OCI-LY7 (cell line): ENCODE measurements at regions of chr11 and their contacts with region 1.

Region 1: DNA sequence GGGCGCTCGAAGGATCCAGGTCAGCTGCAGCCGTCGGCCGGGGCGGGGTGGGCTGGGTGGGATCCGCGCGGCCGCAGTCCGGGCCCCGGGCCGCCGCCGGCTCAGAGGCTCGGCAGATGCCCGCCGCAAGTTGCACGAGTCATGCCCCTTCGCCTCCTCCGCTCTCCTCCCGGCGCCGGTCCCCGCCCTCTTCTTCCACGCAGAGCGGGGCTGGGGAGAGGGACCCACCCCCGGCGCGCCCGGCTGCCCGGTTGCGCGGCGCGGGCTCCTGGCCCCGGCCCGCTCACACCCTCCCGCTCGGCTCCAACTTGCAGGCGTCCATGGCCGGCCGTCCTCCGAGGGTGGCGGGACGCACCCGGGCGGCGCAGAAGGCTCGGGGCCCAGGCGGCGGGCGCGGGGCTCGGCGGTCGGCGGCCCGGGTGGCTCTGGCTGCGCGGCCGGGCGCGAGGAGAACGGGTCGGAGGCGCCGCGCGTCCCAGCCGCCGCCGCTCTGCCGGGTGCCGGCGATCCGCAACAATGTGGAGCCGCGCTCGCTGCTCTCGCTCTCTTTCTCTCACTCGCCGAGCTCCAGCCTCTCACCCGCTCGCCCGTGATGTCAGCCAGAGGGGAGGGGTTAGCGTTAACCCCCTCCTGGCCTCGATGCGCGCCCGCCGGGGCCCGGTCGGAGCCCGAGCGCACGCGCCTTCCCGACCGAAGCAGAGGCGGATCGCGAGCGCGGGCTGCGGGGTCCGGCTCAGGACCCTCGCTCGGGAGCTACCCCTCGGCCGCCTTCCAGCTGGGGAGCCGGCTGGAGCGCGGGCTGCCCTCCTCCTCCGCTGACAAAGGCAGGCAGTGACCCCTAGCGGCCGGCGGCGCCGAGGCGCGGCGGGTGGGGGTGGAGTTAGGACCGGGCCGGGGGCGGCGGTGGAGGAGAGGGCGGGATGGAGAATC is at the start of gene NECTIN1:
- DNase-seq: peak; percentile 88
- H3K4me3 ChIP-seq: peak within 1 kb of the TSS; percentile 69
- H3K27ac ChIP-seq: peak within 1 kb of the TSS; percentile 6
- H3K4me1 ChIP-seq: peaks cover 30% of the 10 kb centered on the region
- CTCF ChIP-seq: peak; percentile 95
- total RNA-seq, gene NECTIN1: 2.3 and 5.8 TPM in 2 replicates

Region 2: GRCh38 chr11:119481021-119481666 is 247.8 kb before region 1 on chr11:
- CTCF ChIA-PET with region 1: no interaction called
- POLR2A ChIA-PET with region 1: no interaction called
- intact Hi-C with region 1: loop called (anchors 5 kb)
- DNase-seq: peak; percentile 58
- H3K4me3 ChIP-seq: no peak overlapping the region
- H3K27ac ChIP-seq: no peak overlapping the region
- H3K4me1 ChIP-seq: no peaks in the 10 kb centered on the region
- CTCF ChIP-seq: peak; percentile 99

Region 3: GRCh38 chr11:119673759-119674336 is 55.1 kb before region 1 on chr11:
- CTCF ChIA-PET with region 1: interaction called, 16 read pairs
- POLR2A ChIA-PET with region 1: interaction called, 7 read pairs
- intact Hi-C with region 1: loop called (anchors 1 kb)
- DNase-seq: peak; percentile 93
- H3K4me3 ChIP-seq: peak overlapping the region; percentile 20
- H3K27ac ChIP-seq: peak overlapping the region; percentile 77
- H3K4me1 ChIP-seq: peaks cover 41% of the 10 kb centered on the region
- CTCF ChIP-seq: peak; percentile 75

Region 4: DNA sequence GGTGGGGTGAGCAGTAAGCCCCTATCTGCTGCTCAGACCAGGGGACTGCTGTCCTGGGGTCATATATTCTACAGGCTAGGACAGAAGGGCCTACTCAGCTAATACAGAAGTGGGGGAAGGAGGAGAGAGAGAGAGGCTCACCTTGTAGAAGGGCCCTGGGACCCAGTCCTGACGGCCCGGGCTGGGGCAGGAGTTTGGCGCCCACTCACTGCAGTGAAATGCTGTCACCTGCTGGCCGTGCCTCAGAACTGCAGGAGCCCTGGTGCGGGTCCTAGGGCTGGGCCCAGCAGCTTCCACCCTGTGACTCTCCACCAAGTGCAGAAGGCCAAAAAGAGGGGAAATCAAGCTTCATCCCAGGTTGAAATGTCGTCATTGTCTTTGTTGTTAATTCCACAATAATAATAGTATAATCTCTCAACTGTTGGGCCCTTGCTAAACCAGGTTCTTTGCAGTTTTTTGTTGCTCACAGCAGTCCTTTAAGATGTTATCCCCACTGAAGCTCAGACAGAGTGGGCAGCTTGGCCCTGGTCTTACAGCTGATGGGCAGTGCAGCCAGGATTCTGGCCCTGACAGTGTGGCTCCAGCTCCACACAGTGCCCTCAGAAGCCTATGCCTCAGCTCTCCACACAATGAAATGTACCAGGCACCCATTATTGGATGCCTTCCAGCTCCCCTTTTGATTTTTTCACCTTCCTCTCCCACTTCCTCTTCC is 379.4 kb after region 1 on chr11:
- CTCF ChIA-PET with region 1: no interaction called
- POLR2A ChIA-PET with region 1: no interaction called
- intact Hi-C with region 1: loop called (anchors 10 kb)
- DNase-seq: peak; percentile 63
- H3K4me3 ChIP-seq: no peak overlapping the region
- H3K27ac ChIP-seq: no peak overlapping the region
- H3K4me1 ChIP-seq: no peaks in the 10 kb centered on the region
- CTCF ChIP-seq: peak; percentile 96

Region 5: GRCh38 chr11:120210626-120211521 is 482.0 kb after region 1 on chr11 and contains the start of gene OAF:
- CTCF ChIA-PET with region 1: no interaction called
- POLR2A ChIA-PET with region 1: no interaction called
- intact Hi-C with region 1: loop called (anchors 2 kb)
- DNase-seq: peak; percentile 88
- H3K4me3 ChIP-seq: peak within 1 kb of the TSS; percentile 71
- H3K27ac ChIP-seq: no peak within 1 kb of the TSS
- H3K4me1 ChIP-seq: peaks cover 14% of the 10 kb centered on the region
- CTCF ChIP-seq: 0 out of 2 replicates have a peak, but pooled peaks have one; percentile 22
- total RNA-seq, gene OAF: 1.9 and 3.4 TPM in 2 replicates